GM10248 (cell line): ENCODE measurements at regions of chr22 and their contacts with region 1.

Region 1: DNA sequence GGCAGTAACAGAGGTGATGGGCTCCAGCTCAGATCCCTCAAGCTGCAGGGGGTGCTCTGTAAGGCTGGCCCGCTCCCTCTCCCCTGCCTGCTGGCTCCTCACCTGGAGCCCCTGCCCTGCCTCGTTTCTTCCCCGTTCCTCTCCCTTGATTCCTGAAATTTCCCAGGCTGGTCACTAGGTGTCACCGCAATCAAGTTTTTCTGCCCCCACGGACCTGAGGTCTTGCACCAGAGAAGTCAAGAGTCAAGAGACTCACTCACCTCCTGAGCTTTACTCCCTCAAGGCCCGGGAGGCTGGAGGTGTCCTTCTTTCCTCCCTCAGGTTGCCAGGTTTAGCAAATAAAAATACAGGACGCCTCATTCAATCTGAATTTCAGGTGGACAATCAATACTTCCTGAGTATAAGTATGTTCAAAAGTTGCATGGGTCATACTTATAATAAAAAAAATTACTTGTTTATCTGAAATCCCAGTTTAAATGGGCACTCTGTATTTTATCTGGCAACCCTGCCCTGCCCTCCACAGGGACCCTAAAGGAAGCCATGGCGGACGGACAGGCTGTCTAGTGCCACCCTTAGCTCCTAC is 69.2 kb downstream of the SCUBE1 start:
- DNase-seq: peak; percentile 84
- CTCF ChIP-seq: peak; percentile 79

Region 2: DNA sequence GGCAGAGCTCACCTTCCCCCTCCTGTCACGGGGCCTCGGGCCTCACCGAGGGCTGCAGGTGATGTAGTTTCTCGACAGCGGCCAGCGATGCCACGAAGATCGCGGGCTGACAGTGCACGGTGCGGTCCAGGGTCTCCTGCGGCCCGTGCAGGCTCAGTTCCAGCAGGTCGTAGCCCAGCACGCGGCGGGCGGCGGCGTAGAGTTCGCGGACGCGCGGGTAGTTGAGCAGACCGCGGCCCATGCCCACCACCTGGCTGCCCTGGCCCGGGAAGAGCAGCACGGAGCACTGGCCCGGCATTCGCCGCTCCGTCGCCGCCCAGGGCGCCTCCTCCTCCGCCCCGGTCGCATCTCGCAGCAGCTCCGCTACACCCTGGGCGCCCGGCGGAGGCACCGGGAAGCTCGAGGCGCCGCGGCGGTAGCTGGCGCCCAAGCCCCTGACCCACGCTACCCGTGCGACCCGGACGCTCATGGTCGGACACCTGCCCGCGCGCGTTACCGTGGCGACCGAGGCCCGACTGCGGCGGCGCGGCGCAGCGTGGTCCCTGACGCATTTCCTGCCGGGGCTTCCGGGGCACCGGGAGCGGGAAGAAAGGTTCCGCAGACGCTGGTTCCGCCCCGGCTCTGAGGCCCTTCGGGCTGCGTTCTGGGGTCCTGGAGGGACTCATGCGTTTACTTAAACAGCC is 131.0 kb before region 1 on chr22 and contains the start of gene MCAT:
- CTCF ChIA-PET with region 1: no interaction called
- POLR2A ChIA-PET with region 1: no interaction called
- DNase-seq: peak; percentile 94
- CTCF ChIP-seq: no peak

Region 3: GRCh38 chr22:43253839-43254238 is 20.2 kb before region 1 on chr22:
- CTCF ChIA-PET with region 1: interaction called, 10 read pairs
- POLR2A ChIA-PET with region 1: no interaction called
- DNase-seq: no peak
- CTCF ChIP-seq: no peak

Region 4: GRCh38 chr22:43263645-43264514 is 10.1 kb before region 1 on chr22:
- CTCF ChIA-PET with region 1: interaction called, 24 read pairs
- POLR2A ChIA-PET with region 1: no interaction called
- DNase-seq: peak; percentile 85
- CTCF ChIP-seq: no peak

Region 5: GRCh38 chr22:43287441-43287840 is 13.4 kb after region 1 on chr22:
- CTCF ChIA-PET with region 1: interaction called, 25 read pairs
- POLR2A ChIA-PET with region 1: no interaction called
- DNase-seq: no peak
- CTCF ChIP-seq: no peak

Region 6: DNA sequence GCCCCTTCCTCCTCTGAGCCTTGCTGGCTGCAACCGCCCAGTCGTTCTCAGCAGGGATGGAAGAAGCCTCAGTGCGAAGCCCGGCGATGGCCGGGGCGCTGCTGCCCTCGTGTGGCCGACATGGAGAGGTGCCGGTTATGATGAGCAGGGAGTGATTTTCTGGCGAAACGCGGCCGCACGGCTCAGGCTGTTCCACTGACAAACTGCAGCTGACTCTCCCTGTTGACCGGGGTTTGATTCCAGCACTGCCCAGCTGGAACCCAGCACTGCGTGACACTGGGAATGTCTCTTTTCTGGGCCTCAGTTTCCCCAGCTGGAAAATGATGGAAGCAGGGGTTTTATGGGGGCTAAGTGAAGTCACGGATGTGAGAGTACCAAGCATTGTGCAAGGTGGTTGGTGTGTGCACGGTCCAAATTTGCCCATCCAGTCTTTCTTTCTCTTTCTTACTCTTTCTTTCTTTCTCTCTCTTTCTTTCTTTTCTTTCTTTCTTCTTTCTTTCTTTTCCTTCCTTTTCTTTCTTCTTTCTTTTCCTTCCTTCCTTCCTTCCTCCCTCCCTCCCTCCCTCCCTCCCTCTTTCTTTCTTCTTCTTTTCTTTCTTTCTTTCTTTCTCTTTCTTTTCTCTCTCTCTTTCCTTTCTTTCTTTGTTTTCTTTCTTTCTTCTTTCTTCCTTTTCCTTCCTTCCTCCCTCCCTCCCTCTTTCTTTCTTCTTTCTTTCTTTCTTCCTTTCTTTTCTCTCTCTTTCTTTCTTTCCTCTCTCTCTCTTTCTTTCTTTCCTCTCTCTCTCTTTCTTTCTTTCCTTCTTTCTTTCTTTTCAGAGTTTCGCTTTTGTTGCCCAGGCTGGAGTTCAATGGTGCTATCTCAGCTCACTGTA is 112.0 kb after region 1 on chr22:
- CTCF ChIA-PET with region 1: interaction called, 50 read pairs
- POLR2A ChIA-PET with region 1: no interaction called
- DNase-seq: peak; percentile 89
- CTCF ChIP-seq: peak; percentile 94